ENCODE measurements at regions of chr5 and their contacts with region 1.

Region 1: DNA sequence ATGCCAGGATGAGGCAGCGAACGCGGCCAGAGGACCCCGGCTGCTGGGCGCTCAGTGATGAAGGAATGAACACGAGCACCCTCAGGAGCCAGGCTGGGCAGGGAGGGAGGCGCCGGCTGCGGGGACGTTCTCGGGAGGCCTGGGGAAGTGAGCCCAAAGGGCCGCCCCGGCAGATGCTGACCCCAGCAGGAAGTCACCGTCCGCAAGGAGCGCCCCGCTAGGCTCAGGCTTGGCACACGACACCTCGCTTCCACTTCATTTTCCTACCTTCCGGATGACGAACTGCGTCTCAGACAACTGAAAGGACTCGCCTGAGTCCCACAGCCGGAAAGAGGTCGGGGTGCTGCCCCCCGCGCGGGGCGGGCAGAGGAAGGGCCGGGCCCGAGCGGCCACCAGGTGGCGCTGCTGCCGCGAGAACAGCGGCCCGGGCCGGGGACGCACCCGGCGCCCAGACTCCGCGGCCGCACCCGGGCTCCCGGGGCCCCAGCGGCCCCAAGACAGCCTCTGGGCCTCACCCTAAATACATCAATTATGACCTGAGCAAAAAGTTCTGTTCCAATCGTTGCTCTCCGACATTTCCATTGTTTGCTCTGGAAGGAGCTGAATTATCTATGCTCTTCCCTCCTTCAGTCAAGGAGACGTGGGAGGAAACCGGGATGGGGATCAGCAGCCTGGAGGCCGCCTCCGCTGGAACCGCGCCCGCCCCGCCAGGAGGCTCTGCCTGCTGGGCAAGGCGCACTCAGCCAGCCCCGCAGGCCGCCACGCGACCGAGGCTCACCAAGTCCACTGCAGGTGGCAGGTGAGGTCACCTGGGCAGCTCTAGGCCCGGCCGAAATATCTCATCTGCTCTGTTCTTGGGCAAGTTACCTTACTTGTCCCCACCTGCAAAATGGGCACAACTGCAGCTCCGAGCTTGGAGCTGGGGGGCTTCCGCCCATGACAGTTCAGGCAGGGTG is 107.0 kb downstream of the ZNF354C start:
- DNase-seq: peak; percentile 15 to 59 (median 45)
- H3K4me3 ChIP-seq: peak overlapping the region in 1 of 4 donors; percentile 19
- H3K27ac ChIP-seq: peak overlapping the region in 1 of 5 donors; percentile 55
- H3K4me1 ChIP-seq: peaks cover 0 to 13% of the 10 kb centered on the region in 2 donors
- H3K27me3 ChIP-seq: no peaks in the 10 kb centered on the region
- CTCF ChIP-seq: peak; percentile 40 to 99 (median 77)
- POLR2A ChIP-seq: no peak

Region 2: GRCh38 chr5:179336126-179336870 is 169.1 kb after region 1 on chr5:
- intact Hi-C with region 1: loop called in 1 of 2 experiments (anchors 10 kb)
- DNase-seq: no peak
- H3K4me3 ChIP-seq: no peak overlapping the region
- H3K27ac ChIP-seq: no peak overlapping the region
- H3K4me1 ChIP-seq: no peaks in the 10 kb centered on the region
- H3K27me3 ChIP-seq: no peaks in the 10 kb centered on the region
- CTCF ChIP-seq: no peak
- POLR2A ChIP-seq: no peak

Region 3: DNA sequence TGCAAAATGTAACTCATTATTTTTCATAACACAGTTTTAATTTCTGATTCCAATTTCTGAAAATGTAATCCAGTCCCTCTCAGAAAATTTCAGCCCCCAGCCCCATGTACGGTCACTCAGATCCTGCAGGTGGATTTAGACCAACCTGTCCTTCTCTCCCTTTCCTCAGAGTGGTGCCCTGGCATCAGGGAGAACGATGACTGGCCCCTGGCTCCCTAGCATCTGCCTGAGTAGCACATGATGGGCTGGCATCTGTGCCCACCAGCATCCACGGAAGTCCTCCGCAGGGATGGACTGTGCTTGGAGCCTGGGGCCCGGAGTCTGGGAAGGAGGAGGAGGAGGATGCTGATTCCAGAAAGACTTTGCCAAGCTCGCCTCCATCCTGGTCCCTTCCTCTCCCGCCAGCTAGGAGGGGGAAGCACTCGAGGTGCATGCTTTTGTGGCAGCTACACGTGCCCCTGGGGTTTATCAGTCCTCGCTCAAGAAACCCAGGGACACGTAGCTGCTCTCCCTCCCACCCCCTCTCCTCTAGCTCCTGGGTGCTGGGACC is 328.8 kb after region 1 on chr5:
- intact Hi-C with region 1: loop called (anchors 2 to 5 kb)
- DNase-seq: no peak
- H3K4me3 ChIP-seq: no peak overlapping the region
- H3K27ac ChIP-seq: no peak overlapping the region
- H3K4me1 ChIP-seq: no peaks in the 10 kb centered on the region
- H3K27me3 ChIP-seq: no peaks in the 10 kb centered on the region
- CTCF ChIP-seq: no peak
- POLR2A ChIP-seq: no peak